Right lobe of liver (tissue), 6 donors: ENCODE measurements at regions of chr14 and their contacts with region 1.

Region 1: DNA sequence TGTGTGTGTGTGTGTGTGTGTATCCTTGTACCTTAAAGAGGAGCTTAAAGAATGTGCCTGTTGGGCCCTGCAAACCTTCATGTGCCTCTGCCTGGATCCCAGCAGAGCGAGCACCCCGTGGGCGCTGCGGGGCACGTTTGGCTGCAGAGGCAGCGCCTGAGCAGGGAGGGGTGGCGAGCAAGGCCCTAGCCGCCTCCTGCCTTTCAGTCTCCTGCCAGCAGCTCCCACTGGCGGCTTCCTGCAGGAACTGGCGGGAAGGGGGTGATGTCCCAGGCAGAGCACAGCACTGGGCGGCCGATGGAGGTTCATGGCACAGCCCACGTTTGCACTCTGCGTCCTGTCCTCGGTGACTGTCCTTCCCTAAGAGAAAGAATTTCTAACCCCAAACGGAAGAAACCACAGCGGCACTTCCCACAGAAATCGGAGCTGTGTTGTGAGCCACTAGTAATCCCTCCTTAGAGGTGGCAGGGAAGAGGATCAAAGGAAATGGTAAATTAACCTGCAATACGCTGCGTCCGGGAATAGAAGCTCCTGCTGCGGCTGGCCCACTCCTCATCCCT is 19.8 kb downstream of the ZBTB42 start:
- DNase-seq: peak; percentile 60 to 75 (median 72)
- ATAC-seq: peak; percentile 47 to 71 (median 60)
- H3K4me3 ChIP-seq: no peak overlapping the region
- H3K27ac ChIP-seq: no peak overlapping the region
- H3K4me1 ChIP-seq: peaks cover 0 to 8% (median 3%) of the 10 kb centered on the region in 4 donors
- H3K27me3 ChIP-seq: no peaks in the 10 kb centered on the region
- CTCF ChIP-seq: peak; percentile 43 to 56 (median 53)
- POLR2A ChIP-seq: no peak

Region 2: GRCh38 chr14:104768437-104769323 is 52.1 kb before region 1 on chr14:
- intact Hi-C with region 1: loop called (anchors 5 kb)
- DNase-seq: peak; percentile 91 to 92 (median 91)
- ATAC-seq: peak; percentile 84 to 90 (median 88)
- H3K4me3 ChIP-seq: peak overlapping the region in 2 of 3 donors; percentile 20 to 28
- H3K27ac ChIP-seq: peak overlapping the region; percentile 66 to 90 (median 76)
- H3K4me1 ChIP-seq: peaks cover 0 to 33% (median 11%) of the 10 kb centered on the region in 4 donors
- H3K27me3 ChIP-seq: no peaks in the 10 kb centered on the region
- CTCF ChIP-seq: peak; percentile 86 to 99 (median 97)
- POLR2A ChIP-seq: peak; percentile 10

Region 3: DNA sequence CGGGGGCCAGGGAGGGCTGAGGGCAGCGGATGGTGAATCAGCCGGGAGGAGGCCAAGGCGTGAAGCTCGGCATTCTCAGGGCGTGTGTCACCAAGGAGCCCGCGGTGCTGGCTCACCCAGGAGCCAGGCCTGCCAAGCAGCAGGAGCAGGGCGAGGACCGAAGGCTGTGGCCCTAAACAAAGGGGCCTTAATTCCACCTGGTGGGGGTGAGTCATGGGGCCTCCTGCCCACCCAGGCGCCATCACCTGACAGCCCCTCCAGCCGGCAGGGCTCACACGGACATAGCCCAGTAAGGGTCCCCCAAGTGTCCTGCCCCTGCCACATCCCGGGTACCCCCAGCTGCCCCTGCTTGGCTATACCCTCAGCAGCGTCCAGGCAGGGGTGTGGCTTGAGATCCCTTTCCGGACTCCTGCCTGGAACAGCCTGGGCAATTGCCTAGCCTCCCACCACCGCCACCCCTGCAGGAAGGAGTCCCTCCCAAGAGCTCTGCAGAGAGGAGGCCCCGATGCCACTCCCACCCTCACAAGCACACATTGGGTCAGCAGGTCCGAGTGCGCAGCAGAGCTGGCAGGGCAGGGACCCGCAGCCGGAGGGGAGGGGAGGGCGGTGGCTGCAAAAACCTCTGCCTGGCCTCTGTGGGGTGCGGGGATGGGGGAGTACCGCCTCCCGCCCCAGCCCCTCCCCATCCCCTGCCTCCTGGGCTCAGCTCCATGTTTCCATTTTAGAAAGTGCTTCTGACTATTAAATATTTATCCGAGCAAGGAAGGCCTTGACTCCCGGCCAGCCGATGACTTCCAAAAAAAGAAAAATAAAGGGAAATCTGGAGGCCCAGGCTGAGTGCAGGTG is 152.8 kb after region 1 on chr14:
- intact Hi-C with region 1: no loop called
- DNase-seq: peak; percentile 37 to 56 (median 41)
- ATAC-seq: peak in 1 of 4 donors; percentile 2
- H3K4me3 ChIP-seq: no peak overlapping the region
- H3K27ac ChIP-seq: no peak overlapping the region
- H3K4me1 ChIP-seq: peaks cover 0 to 23% (median 1%) of the 10 kb centered on the region in 4 donors
- H3K27me3 ChIP-seq: no peaks in the 10 kb centered on the region
- CTCF ChIP-seq: no peak
- POLR2A ChIP-seq: no peak

Region 4: DNA sequence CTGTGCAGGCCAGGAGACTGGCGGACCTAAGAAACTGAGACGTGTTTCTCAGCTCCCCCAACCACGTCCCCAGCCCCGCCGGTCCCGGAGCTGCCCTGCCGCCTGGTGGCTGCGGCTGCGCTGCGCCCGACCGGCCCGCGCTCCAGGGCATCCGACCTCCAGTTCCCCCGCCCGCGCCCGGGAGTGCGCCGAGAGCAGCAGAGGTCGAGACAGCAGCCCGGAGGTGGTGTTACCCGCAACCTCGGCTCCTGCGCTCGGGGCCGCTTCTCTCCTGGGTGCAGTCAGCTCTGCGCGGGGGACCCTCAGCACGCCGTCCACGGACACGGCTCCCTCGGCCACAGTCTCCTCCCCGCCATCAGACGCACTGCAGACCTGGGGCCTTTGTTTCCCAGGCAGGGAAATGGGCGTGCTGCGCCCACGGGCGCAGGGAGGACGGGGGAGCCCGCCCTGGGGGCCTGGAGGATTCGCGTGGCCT is 266.1 kb after region 1 on chr14:
- intact Hi-C with region 1: no loop called
- DNase-seq: peak; percentile 73 to 84 (median 81)
- ATAC-seq: peak; percentile 40 to 62 (median 58)
- H3K4me3 ChIP-seq: peak overlapping the region; percentile 12 to 32 (median 31)
- H3K27ac ChIP-seq: no peak overlapping the region
- H3K4me1 ChIP-seq: peaks cover 2 to 19% (median 10%) of the 10 kb centered on the region in 4 donors
- H3K27me3 ChIP-seq: peaks cover 0 to 9% of the 10 kb centered on the region in 2 donors
- CTCF ChIP-seq: peak; percentile 79 to 83 (median 80)
- POLR2A ChIP-seq: no peak